ENCODE measurements at regions of chr11 and their contacts with region 1.

Region 1: GRCh38 chr11:19951558-19952115 is 208.6 kb downstream of the DBX1 start:
- DNase-seq: peak; percentile 87
- ATAC-seq: peak; percentile 55
- H3K4me3 ChIP-seq: no peak overlapping the region
- H3K27ac ChIP-seq: no peak overlapping the region
- H3K4me1 ChIP-seq: peaks cover 26% of the 10 kb centered on the region
- H3K27me3 ChIP-seq: no peaks in the 10 kb centered on the region
- CTCF ChIP-seq: peak; percentile 70

Region 2: GRCh38 chr11:19846654-19847305 is 104.9 kb before region 1 on chr11:
- CTCF ChIA-PET with region 1: no interaction called
- POLR2A ChIA-PET with region 1: no interaction called
- intact Hi-C with region 1: no loop called
- DNase-seq: no peak
- ATAC-seq: no peak
- H3K4me3 ChIP-seq: no peak overlapping the region
- H3K27ac ChIP-seq: no peak overlapping the region
- H3K4me1 ChIP-seq: peaks cover 18% of the 10 kb centered on the region
- H3K27me3 ChIP-seq: no peaks in the 10 kb centered on the region
- CTCF ChIP-seq: no peak

Region 3: DNA sequence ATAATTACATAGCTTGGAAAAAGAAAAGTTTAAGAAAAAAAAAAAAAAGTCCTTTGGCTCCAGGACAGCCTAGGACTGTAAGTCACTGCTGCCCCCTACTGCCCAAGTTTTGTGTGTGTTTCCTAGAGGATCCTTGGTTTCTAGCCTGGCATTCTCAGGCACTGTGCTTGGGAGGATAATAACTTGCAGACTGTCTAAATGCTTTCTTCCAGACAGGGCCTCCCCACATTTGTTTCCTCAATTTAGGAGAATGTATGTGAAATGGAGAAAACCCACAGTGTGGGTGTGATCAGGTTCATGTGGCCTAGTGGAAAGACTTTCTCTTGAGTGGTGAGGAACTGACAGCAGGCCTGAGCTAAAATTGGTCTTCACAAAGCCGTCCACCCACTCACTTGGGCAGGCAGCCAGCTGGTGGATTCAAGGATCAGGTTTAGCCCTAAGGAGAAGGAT is 48.0 kb before region 1 on chr11:
- CTCF ChIA-PET with region 1: no interaction called
- POLR2A ChIA-PET with region 1: no interaction called
- intact Hi-C with region 1: loop called (anchors 1 kb)
- DNase-seq: peak; percentile 78
- ATAC-seq: peak; percentile 86
- H3K4me3 ChIP-seq: no peak overlapping the region
- H3K27ac ChIP-seq: no peak overlapping the region
- H3K4me1 ChIP-seq: no peaks in the 10 kb centered on the region
- H3K27me3 ChIP-seq: no peaks in the 10 kb centered on the region
- CTCF ChIP-seq: peak; percentile 84

Region 4: GRCh38 chr11:19929655-19930054 is 22.0 kb before region 1 on chr11:
- CTCF ChIA-PET with region 1: no interaction called
- POLR2A ChIA-PET with region 1: interaction called, 17 read pairs
- intact Hi-C with region 1: no loop called
- DNase-seq: no peak
- ATAC-seq: peak; percentile 55; the same call in 1 of the 2 replicates
- H3K4me3 ChIP-seq: no peak overlapping the region
- H3K27ac ChIP-seq: no peak overlapping the region
- H3K4me1 ChIP-seq: 0 out of 2 replicates have a peak, but pooled peaks cover 6% of the 10 kb centered on the region
- H3K27me3 ChIP-seq: no peaks in the 10 kb centered on the region
- CTCF ChIP-seq: no peak

Region 5: DNA sequence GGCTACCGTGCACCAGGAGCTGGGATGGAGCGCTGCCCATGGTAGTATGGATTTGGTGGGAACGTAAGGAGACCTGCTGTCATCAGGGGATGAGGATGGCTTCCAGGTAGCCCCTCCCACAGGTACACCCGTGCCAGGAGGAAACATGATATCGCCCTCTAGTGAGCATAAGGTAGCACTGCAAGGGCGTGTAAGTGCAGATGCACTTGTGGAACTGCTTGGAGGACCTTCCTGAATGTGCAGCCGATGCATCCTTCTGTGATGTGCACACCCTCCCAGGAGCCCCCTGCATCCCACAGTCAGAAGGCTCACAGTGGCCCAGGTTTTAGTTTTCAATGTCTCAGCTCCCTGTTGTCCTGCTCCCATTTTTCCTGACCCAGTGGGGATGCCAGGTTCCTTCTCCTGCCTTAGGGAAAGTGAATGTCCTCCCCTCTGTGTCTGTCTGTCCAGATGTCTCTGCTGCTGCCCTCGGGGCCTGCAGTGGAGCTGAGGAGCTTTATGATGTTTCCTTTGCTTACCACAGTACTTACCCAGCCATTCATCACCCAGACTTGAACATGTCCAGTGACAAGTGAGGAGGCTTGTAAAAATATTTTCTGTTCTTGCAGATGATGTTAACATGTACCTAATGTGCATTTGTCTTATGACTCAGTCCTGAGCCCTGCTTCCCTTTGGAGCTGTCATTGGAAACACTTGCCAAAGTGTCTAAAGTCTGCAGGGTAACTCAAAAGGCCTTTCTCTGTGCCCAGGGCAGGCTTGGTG is 159.5 kb after region 1 on chr11:
- CTCF ChIA-PET with region 1: interaction called, 5 read pairs
- POLR2A ChIA-PET with region 1: no interaction called
- intact Hi-C with region 1: loop called (anchors 1 kb)
- DNase-seq: peak; percentile 90
- ATAC-seq: peak; percentile 77
- H3K4me3 ChIP-seq: no peak overlapping the region
- H3K27ac ChIP-seq: peak overlapping the region; percentile 97
- H3K4me1 ChIP-seq: peaks cover 35% of the 10 kb centered on the region
- H3K27me3 ChIP-seq: no peaks in the 10 kb centered on the region
- CTCF ChIP-seq: peak; percentile 91

Region 6: DNA sequence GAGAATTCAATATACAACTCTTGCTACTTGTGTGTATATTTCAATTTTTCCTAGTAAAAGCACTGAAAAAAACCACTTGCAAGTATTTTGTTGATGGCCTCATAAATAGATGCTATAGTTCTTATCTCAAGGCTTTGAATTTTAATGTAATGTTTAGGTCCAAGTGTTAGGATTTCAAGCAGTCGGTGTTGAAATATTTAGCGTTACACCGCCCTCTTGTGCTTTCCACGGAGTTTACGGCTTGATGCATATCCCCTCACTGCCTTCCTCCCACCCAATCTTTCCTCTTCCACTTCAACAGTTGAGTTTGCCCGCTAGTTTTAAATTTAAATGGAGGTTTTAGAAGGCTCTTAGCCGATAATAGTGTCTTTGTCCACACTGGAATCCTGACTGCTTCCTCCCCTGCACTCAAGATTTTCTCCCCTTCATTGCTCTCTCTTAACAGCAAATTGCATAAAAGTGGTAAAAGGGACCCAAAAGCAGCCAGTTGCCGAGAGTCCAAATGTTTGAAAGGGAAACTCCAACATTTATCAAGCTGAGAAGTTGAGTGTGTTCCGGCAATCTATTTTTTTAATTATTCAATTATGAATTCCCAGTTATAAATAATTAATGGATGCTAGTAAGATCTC is 386.0 kb after region 1 on chr11:
- CTCF ChIA-PET with region 1: no interaction called
- POLR2A ChIA-PET with region 1: no interaction called
- intact Hi-C with region 1: loop called (anchors 1 kb)
- DNase-seq: peak; percentile 47
- ATAC-seq: peak; percentile 75
- H3K4me3 ChIP-seq: no peak overlapping the region
- H3K27ac ChIP-seq: no peak overlapping the region
- H3K4me1 ChIP-seq: no peaks in the 10 kb centered on the region
- H3K27me3 ChIP-seq: peaks cover 84% of the 10 kb centered on the region
- CTCF ChIP-seq: peak; percentile 68

Measured in PC-3 (cell line).